Thyroid gland (tissue), 4 donors: ENCODE measurements at regions of chr19 and their contacts with region 1.

Region 1: DNA sequence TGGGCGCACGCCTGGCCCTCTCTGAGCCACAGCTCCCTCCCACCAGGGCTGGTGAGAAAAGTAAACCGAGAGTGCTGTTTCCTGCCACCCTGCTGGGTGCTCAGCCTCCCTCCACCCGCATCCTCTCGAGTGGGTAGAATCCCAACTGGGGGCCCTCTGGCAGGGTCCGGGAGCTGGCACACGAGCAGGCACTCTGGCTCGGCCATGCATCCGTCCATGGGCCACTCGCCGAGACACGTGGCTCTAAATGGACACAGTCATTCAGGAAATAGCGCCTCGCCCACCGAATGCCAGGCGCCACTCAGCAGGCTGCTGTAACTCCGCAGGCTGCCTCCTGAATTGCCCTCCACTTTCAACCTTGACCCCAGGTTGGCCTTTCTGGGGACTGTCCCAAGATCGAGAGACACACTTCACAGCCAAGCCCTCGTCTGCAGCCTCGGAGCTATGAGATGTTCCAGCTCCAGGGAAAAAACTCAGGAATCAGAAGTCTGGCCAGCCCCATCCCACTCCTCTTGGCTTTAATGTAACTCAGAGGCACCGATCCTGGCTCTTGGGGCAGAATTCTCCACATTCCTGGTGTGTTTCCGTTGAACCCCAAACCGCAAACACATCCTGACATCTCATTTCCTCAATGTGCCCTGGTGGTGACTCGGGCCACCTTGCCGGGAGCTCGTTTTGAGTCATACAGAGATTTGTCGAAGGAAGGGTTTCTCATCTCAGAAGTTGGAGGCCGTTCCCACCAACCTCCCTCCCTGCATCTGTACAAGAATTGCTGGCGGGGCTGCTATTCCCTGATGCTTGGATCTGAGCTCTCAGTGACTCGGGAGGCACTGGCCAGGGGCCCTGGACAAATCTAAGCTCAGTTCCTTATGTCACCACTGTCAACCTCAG is 14.1 kb downstream of the KLF2 start:
- DNase-seq: peak in 1 of 2 donors; percentile 37
- H3K4me3 ChIP-seq: no peak overlapping the region
- H3K27ac ChIP-seq: peak overlapping the region in 1 of 3 donors; percentile 10
- H3K4me1 ChIP-seq: peaks cover 21 to 33% of the 10 kb centered on the region in 2 donors
- H3K27me3 ChIP-seq: no peaks in the 10 kb centered on the region
- CTCF ChIP-seq: no peak
- POLR2A ChIP-seq: no peak

Region 2: GRCh38 chr19:16160943-16161560 is 177.7 kb before region 1 on chr19:
- intact Hi-C with region 1: no loop called
- DNase-seq: no peak
- H3K4me3 ChIP-seq: no peak overlapping the region
- H3K27ac ChIP-seq: no peak overlapping the region
- H3K4me1 ChIP-seq: no peaks in the 10 kb centered on the region
- H3K27me3 ChIP-seq: no peaks in the 10 kb centered on the region
- CTCF ChIP-seq: no peak
- POLR2A ChIP-seq: no peak

Region 3: GRCh38 chr19:16232568-16232967 is 106.1 kb before region 1 on chr19:
- intact Hi-C with region 1: no loop called
- DNase-seq: no peak
- H3K4me3 ChIP-seq: no peak overlapping the region
- H3K27ac ChIP-seq: no peak overlapping the region
- H3K4me1 ChIP-seq: no peaks in the 10 kb centered on the region
- H3K27me3 ChIP-seq: no peaks in the 10 kb centered on the region
- CTCF ChIP-seq: no peak
- POLR2A ChIP-seq: no peak

Region 4: DNA sequence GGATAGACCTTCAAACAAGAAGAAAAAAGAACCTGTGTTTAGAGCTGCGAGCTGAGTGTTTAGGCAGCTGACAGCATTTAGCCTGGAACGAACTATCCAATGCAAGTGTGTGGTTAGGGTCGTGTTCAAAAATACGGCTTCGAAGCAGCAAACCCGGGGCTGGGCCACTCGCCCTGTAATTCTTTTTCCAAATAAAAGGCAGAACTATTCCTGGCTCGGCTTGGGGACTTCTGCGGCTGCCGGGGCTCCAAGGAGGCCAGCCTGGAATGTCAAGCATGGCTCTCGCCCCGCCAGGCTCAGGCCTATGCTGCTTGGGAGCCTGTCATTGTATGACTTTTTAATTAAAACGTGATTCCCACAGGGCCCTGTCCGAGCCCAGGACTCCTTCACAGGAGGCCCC is 65.8 kb before region 1 on chr19:
- intact Hi-C with region 1: no loop called
- DNase-seq: no peak
- H3K4me3 ChIP-seq: no peak overlapping the region
- H3K27ac ChIP-seq: peak overlapping the region in 1 of 3 donors; percentile 1
- H3K4me1 ChIP-seq: peaks cover 0 to 17% of the 10 kb centered on the region in 2 donors
- H3K27me3 ChIP-seq: no peaks in the 10 kb centered on the region
- CTCF ChIP-seq: no peak
- POLR2A ChIP-seq: no peak

Region 5: DNA sequence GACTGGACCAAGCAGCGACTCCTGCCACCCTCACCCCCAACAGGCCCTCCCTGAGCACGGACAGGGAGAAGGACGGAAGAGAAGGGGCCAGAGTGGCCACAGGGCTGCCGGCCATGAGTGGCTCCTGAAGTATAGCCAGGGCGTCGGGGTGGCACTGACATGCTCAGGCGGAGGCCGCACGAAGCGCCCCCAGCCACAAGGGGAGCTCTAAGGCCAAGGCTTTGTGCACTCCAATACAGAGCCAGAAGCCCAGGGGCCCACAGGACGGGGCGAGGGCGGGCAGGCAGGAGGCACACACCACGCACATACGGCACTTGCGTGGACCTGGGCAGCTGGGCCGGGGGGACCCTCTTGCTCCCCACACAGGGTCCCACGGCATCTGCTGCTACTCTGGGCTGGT is 37.9 kb after region 1 on chr19:
- intact Hi-C with region 1: loop called (anchors 5 kb)
- DNase-seq: no peak
- H3K4me3 ChIP-seq: no peak overlapping the region
- H3K27ac ChIP-seq: no peak overlapping the region
- H3K4me1 ChIP-seq: peaks cover 3 to 35% of the 10 kb centered on the region in 2 donors
- H3K27me3 ChIP-seq: no peaks in the 10 kb centered on the region
- CTCF ChIP-seq: peak in 1 of 6 experiments; percentile 15
- POLR2A ChIP-seq: no peak

Region 6: GRCh38 chr19:16417660-16418596 is 79.2 kb after region 1 on chr19:
- intact Hi-C with region 1: no loop called
- DNase-seq: peak; percentile 58 to 61
- H3K4me3 ChIP-seq: no peak overlapping the region
- H3K27ac ChIP-seq: no peak overlapping the region
- H3K4me1 ChIP-seq: peaks cover 0 to 4% of the 10 kb centered on the region in 2 donors
- H3K27me3 ChIP-seq: no peaks in the 10 kb centered on the region
- CTCF ChIP-seq: peak; percentile 66 to 88 (median 82)
- POLR2A ChIP-seq: no peak